Activated CD8-positive, alpha-beta T cell treated with anti-CD3 and anti-CD28 coated beads for 36 hours (primary cell): ENCODE measurements at regions of chr12 and their contacts with region 1.

Region 1: GRCh38 chr12:98572010-98572409 is 21.5 kb upstream of the SLC25A3 start:
- DNase-seq: no peak
- ATAC-seq: no peak
- H3K4me3 Mint-ChIP-seq: no peak overlapping the region
- H3K27ac Mint-ChIP-seq: no peak overlapping the region
- H3K4me1 Mint-ChIP-seq: no peaks in the 10 kb centered on the region
- H3K27me3 Mint-ChIP-seq: no peaks in the 10 kb centered on the region
- CTCF ChIP-seq: no peak

Region 2: DNA sequence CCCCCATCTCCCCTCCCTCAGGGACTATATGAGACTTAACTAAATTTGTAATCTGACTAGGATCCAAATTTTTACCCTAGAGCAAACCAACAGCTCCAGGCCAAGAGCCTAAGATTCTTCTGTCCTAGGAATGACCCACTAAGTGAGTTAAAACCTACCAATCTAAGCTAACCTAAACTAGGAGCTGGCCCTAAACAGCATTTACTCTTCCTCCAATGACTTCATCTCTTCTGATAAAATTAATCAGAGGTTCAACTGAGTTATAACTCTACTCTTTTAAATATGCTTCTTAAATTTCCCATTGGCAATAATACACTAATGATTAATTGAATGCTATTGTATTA is 96.5 kb before region 1 on chr12:
- CTCF ChIA-PET with region 1: no interaction called
- POLR2A ChIA-PET with region 1: no interaction called
- intact Hi-C with region 1: no loop called
- DNase-seq: no peak
- ATAC-seq: no peak
- H3K4me3 Mint-ChIP-seq: no peak overlapping the region
- H3K27ac Mint-ChIP-seq: no peak overlapping the region
- H3K4me1 Mint-ChIP-seq: no peaks in the 10 kb centered on the region
- H3K27me3 Mint-ChIP-seq: no peaks in the 10 kb centered on the region
- CTCF ChIP-seq: no peak

Region 3: DNA sequence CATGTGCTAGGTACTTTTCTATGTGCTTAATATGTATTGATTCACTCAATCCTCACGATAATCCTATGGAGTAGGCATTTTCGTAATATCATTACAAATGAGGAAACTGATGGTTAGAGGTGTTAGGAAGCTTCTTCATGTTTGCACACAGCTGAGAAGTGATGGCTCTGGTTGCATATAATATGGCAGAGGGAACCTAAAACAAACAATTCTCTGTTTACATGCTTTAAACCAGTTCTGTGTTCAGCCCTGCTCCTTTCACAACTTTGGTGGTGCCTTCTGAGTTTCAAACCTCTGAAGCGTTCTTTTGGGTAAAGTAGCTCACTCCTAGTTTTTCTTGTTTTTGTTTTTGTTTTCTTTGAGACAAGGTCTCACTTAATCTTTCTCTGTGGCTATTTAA is 21.2 kb before region 1 on chr12:
- CTCF ChIA-PET with region 1: interaction called, 20 read pairs
- POLR2A ChIA-PET with region 1: interaction called, 5 read pairs
- intact Hi-C with region 1: no loop called
- DNase-seq: no peak
- ATAC-seq: no peak
- H3K4me3 Mint-ChIP-seq: no peak overlapping the region
- H3K27ac Mint-ChIP-seq: peak overlapping the region; percentile 5
- H3K4me1 Mint-ChIP-seq: no peaks in the 10 kb centered on the region
- H3K27me3 Mint-ChIP-seq: no peaks in the 10 kb centered on the region
- CTCF ChIP-seq: no peak

Region 4: DNA sequence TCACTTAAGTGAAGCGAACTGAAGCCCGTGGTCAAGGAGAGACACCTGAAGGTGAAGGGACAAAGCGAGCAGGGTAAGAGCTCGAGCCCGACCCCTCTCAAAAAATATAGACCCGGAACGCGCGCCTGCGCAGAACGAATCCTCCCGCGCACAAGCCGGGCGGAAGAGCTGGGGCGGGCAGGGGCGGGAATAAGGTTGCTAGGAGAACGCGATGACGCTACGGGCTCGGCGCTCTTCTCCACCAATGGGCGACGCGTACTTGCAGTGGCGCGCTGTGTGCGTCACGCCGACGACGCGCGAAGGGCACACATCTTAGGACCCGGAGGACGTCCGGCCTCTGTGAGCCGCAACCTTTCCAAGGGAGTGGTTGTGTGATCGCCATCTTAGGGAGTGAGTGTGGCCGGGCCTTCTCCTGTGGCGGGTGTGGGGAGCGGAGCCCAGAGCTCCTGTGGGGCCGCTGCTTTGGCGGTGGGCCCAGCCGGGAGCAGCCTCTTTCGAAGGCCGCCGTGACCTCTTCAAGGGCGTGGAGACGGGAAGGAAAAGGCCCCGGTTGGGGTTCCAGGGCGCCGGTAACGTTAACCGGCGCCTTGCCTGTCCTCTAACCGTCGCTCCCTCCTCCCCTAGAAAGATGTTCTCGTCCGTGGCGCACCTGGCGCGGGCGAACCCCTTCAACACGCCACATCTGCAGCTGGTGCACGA is 21.5 kb after region 1 on chr12 and contains the start of gene SLC25A3:
- CTCF ChIA-PET with region 1: interaction called, 42 read pairs
- POLR2A ChIA-PET with region 1: interaction called, 4 read pairs
- intact Hi-C with region 1: no loop called
- DNase-seq: peak; percentile 94
- ATAC-seq: peak; percentile 97
- H3K4me3 Mint-ChIP-seq: peak within 1 kb of the TSS; percentile 98
- H3K27ac Mint-ChIP-seq: peak within 1 kb of the TSS; percentile 97
- H3K4me1 Mint-ChIP-seq: peaks cover 28% of the 10 kb centered on the region
- H3K27me3 Mint-ChIP-seq: no peaks in the 10 kb centered on the region
- CTCF ChIP-seq: no peak
- total RNA-seq, gene SLC25A3: 665 to 672 TPM

Region 5: DNA sequence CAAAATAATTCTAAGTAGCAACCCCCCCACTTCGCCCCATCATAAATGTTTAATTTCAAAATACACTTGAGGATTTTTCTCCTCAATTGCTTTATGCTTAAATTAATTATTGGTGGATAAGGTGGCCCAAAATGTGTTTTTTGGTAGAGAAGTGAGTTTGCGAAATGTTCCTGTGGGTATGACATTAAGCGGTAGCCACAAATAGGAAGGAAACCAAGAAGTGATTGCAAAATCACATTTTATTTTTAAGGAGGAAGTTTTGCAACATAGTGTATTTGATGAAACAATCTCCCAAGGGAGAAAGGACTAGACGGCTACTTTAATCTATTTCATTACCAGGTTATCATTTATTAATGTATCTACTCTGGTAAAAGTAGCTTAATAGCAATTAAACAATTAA is 46.9 kb after region 1 on chr12:
- CTCF ChIA-PET with region 1: interaction called, 14 read pairs
- POLR2A ChIA-PET with region 1: no interaction called
- intact Hi-C with region 1: no loop called
- DNase-seq: no peak
- ATAC-seq: no peak
- H3K4me3 Mint-ChIP-seq: no peak overlapping the region
- H3K27ac Mint-ChIP-seq: no peak overlapping the region
- H3K4me1 Mint-ChIP-seq: no peaks in the 10 kb centered on the region
- H3K27me3 Mint-ChIP-seq: no peaks in the 10 kb centered on the region
- CTCF ChIP-seq: no peak

Region 6: GRCh38 chr12:98644711-98645402 is 72.8 kb after region 1 on chr12 and contains the starts of genes APAF1 and IKBIP:
- CTCF ChIA-PET with region 1: interaction called, 53 read pairs
- POLR2A ChIA-PET with region 1: interaction called, 3 read pairs
- intact Hi-C with region 1: loop called (anchors 5 kb)
- DNase-seq: peak; percentile 98
- ATAC-seq: peak; percentile 90
- H3K4me3 Mint-ChIP-seq: peak within 1 kb of the TSS; percentile 98
- H3K27ac Mint-ChIP-seq: peak within 1 kb of the TSS; percentile 96
- H3K4me1 Mint-ChIP-seq: peaks cover 15% of the 10 kb centered on the region
- H3K27me3 Mint-ChIP-seq: no peaks in the 10 kb centered on the region
- CTCF ChIP-seq: no peak
- total RNA-seq, gene APAF1: 14.3 to 17.9 TPM
- total RNA-seq, gene IKBIP: 34.9 to 35.4 TPM

Region 7: DNA sequence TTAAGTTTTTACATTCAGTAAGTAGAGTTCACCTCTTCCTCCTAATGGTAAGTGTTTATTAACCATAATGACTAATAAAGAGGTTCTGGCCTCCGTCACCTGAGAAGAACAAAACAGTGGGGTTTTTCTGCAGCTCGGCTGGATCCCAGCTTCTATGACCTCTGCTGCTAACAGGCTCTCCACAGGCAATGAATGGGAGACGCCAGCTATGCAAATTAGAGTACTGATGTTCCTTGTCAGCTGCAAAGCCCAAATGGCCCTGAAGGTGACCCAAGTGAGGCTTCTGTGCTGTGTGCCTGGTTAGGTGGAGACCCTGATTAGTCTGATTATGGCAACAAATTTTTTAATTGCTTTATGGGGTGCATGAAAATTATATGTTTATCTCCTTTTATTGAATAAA is 291.2 kb after region 1 on chr12:
- CTCF ChIA-PET with region 1: no interaction called
- POLR2A ChIA-PET with region 1: no interaction called
- intact Hi-C with region 1: no loop called
- DNase-seq: no peak
- ATAC-seq: no peak
- H3K4me3 Mint-ChIP-seq: no peak overlapping the region
- H3K27ac Mint-ChIP-seq: no peak overlapping the region
- H3K4me1 Mint-ChIP-seq: no peaks in the 10 kb centered on the region
- H3K27me3 Mint-ChIP-seq: no peaks in the 10 kb centered on the region
- CTCF ChIP-seq: no peak

Region 8: DNA sequence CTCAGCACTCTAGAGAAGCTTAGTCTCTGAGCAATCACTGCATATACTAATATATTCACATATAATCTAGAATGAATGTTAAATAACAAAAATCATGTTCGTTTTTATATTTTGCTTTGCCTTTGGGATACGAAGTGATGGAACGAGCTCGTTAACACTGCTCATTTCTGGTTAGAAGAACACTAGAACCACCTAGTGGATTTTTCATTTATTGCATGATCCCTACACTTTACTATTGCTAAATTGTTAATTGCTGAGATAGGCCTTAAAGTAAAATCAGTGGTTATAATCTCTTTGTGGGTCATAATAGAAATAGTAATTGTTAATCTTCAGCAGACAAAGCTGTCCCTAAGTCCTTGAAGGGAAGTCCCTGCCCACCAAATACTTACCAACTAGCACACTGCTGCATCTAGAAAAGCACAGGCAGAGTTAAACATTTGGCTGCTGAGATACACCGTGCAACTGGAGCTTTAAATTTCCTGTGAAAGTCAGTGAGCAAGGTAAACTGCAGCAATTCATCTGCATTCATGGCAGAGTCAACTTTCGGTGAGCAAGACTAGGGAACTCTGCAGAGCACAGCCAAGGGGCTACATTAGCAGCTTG is 426.8 kb after region 1 on chr12:
- CTCF ChIA-PET with region 1: interaction called, 11 read pairs
- POLR2A ChIA-PET with region 1: no interaction called
- intact Hi-C with region 1: loop called (anchors 5 kb)
- DNase-seq: no peak
- ATAC-seq: peak; percentile 79
- H3K4me3 Mint-ChIP-seq: no peak overlapping the region
- H3K27ac Mint-ChIP-seq: no peak overlapping the region
- H3K4me1 Mint-ChIP-seq: no peaks in the 10 kb centered on the region
- H3K27me3 Mint-ChIP-seq: peaks cover 4% of the 10 kb centered on the region
- CTCF ChIP-seq: peak; percentile 69